ENCODE measurements at regions of chr1 and their contacts with region 1.

Region 1: DNA sequence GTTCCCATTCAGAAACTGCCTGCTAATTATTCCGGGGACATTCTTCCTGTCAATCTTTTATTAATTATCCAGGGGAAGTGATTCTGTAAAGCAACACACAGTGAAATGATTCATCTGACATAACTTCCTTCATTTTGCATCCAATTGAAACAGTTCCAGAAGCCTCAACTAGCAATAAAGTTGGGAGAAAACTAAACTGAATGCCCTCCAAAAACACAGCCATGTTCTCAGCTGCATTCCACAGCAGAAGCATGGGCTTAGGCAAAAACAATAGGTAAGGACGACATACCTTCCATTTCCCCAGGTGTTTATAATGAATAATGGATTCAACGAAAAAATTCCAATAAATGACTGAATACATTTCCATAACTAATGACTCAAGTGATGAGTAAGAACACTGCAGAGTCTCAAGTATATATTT is 36.9 kb upstream of the TARBP1 start:
- DNase-seq: peak; percentile 55
- ATAC-seq: peak; percentile 78
- H3K4me3 ChIP-seq: no peak overlapping the region
- H3K27ac ChIP-seq: peak overlapping the region; percentile 83
- H3K4me1 ChIP-seq: peaks cover 12% of the 10 kb centered on the region
- H3K27me3 ChIP-seq: no peaks in the 10 kb centered on the region
- CTCF ChIP-seq: no peak

Region 2: DNA sequence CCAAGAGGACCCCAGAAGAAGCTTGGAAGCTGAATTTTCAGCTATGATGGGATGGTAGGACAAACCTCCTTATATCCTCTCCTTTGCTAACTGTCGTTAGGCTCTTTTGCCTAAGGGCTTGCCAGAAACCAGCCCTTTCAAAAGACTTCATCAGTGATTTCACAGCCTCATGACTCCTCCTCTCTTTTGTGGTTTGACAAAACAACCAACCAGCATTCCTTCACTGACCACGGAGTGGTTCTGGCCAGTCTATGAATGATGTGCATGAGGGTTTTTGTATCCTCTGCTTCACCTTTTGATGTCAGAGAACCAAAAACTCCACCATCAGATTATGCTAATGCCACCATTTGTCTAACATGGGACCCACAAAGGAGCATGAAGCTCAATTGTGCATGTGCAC is 259.5 kb before region 1 on chr1:
- CTCF ChIA-PET with region 1: no interaction called
- POLR2A ChIA-PET with region 1: no interaction called
- intact Hi-C with region 1: no loop called
- DNase-seq: no peak
- ATAC-seq: no peak
- H3K4me3 ChIP-seq: no peak overlapping the region
- H3K27ac ChIP-seq: no peak overlapping the region
- H3K4me1 ChIP-seq: peaks cover 12% of the 10 kb centered on the region
- H3K27me3 ChIP-seq: no peaks in the 10 kb centered on the region
- CTCF ChIP-seq: no peak

Region 3: GRCh38 chr1:234473118-234473517 is 42.7 kb before region 1 on chr1:
- CTCF ChIA-PET with region 1: no interaction called
- POLR2A ChIA-PET with region 1: no interaction called
- intact Hi-C with region 1: no loop called
- DNase-seq: no peak
- ATAC-seq: no peak
- H3K4me3 ChIP-seq: no peak overlapping the region
- H3K27ac ChIP-seq: no peak overlapping the region
- H3K4me1 ChIP-seq: peaks cover 7% of the 10 kb centered on the region
- H3K27me3 ChIP-seq: no peaks in the 10 kb centered on the region
- CTCF ChIP-seq: no peak

Region 4: DNA sequence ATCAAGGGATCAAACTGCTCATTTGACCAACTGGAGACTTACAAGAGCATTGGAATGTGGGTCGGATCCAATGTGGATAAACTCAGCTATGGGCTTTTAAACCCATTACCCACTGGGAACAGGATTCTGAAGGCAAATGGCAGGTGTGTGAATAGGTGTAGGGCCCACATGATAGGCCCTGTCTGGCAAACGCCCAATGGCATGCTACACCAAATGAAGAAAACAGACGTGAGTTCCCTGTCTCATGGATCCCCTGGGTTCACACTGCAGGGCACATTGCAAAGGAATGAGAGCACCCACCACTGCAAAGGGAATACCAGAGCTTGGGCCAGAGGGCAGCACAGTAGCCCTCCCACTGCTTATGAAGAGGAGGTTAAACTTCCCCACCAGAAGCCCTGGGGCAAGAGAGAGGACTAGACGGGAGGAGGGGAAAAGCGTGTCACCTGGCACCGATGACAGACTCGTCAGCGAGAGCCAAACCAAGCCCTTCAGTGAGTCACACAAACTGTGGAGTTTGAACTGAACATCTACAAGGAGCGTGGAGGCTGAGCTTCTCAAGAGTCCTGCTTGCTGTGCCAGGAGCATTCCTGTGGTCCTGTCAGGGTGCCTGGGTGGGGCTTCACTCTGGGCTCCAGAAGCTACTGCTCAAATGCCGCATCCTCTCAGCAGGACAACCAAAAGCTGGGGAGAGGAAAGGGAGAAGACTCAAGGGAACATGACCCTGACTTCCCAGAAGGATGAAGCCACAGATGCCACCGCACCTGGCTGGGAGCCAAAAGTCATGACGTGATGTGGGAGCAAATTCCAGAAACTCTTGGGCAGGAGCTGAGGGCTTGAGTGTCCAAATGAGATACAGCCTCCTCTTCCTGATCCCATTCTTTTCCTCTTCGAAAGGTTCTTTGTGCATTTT is 551.7 kb after region 1 on chr1:
- CTCF ChIA-PET with region 1: no interaction called
- POLR2A ChIA-PET with region 1: interaction called, 12 read pairs
- intact Hi-C with region 1: no loop called
- DNase-seq: peak; percentile 98
- ATAC-seq: peak; percentile 82
- H3K4me3 ChIP-seq: peak overlapping the region; percentile 47; the same call in 1 of the 2 replicates
- H3K27ac ChIP-seq: peak overlapping the region; percentile 100
- H3K4me1 ChIP-seq: peaks cover 60% of the 10 kb centered on the region
- H3K27me3 ChIP-seq: no peaks in the 10 kb centered on the region
- CTCF ChIP-seq: no peak

Measured in PC-3 (cell line).